ENCODE measurements at regions of chr16 and their contacts with region 1.

Region 1: DNA sequence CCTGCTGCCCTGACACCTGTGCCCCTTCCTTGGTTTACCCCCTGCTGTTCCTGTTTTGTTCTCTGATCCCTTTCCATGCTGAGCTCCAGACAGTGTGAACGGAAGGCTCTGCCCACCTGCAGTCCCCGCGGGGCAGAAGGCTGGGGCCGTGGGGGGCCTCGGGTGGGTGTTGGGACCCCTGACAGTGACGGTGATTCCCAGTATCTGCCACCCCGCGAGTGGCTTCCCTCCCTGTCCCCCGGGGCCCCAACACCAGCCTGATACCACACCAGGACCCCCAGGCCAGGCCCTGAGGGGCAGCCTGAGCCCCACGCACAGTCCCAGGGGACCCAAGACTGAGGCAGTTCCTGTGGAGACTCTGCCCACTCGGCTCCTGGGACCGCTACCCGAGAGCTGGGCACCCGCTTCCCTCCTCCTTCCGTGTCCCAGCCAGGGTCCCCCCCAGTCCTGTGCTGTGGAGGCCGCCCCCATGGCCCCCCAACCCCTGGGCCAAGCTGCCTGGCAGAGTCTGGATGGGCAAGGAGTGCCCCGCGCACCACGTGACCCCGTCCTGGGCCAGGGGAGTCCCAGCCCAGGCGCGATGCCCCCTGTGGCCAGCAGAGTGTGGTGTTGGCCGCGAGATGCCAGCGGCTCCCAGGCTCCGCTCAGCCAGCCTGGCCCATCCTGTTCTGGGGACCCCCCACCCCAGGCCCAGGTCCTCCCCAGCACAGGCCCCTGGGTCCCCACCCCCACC is 10.0 kb upstream of the C1QTNF8 start:
- DNase-seq: no peak
- ATAC-seq: no peak
- H3K4me3 ChIP-seq: no peak overlapping the region
- H3K27ac ChIP-seq: no peak overlapping the region
- H3K4me1 ChIP-seq: peaks cover 0 to 4% of the 10 kb centered on the region in 2 donors
- H3K27me3 ChIP-seq: peaks cover 28 to 52% (median 39%) of the 10 kb centered on the region in 3 donors
- CTCF ChIP-seq: peak; percentile 32 to 74 (median 70)
- POLR2A ChIP-seq: no peak

Region 2: GRCh38 chr16:1048442-1049112 is 57.5 kb before region 1 on chr16:
- in situ Hi-C with region 1: no loop called
- intact Hi-C with region 1: no loop called
- DNase-seq: no peak
- ATAC-seq: no peak
- H3K4me3 ChIP-seq: no peak overlapping the region
- H3K27ac ChIP-seq: no peak overlapping the region
- H3K4me1 ChIP-seq: peaks cover 0 to 4% of the 10 kb centered on the region in 2 donors
- H3K27me3 ChIP-seq: peaks cover 49 to 79% (median 66%) of the 10 kb centered on the region in 3 donors
- CTCF ChIP-seq: no peak
- POLR2A ChIP-seq: no peak

Region 3: GRCh38 chr16:1063728-1064127 is 42.3 kb before region 1 on chr16:
- in situ Hi-C with region 1: no loop called
- intact Hi-C with region 1: no loop called
- DNase-seq: no peak
- ATAC-seq: no peak
- H3K4me3 ChIP-seq: no peak overlapping the region
- H3K27ac ChIP-seq: no peak overlapping the region
- H3K4me1 ChIP-seq: no peaks in the 10 kb centered on the region
- H3K27me3 ChIP-seq: peaks cover 29 to 48% (median 32%) of the 10 kb centered on the region in 3 donors
- CTCF ChIP-seq: no peak
- POLR2A ChIP-seq: no peak

Region 4: DNA sequence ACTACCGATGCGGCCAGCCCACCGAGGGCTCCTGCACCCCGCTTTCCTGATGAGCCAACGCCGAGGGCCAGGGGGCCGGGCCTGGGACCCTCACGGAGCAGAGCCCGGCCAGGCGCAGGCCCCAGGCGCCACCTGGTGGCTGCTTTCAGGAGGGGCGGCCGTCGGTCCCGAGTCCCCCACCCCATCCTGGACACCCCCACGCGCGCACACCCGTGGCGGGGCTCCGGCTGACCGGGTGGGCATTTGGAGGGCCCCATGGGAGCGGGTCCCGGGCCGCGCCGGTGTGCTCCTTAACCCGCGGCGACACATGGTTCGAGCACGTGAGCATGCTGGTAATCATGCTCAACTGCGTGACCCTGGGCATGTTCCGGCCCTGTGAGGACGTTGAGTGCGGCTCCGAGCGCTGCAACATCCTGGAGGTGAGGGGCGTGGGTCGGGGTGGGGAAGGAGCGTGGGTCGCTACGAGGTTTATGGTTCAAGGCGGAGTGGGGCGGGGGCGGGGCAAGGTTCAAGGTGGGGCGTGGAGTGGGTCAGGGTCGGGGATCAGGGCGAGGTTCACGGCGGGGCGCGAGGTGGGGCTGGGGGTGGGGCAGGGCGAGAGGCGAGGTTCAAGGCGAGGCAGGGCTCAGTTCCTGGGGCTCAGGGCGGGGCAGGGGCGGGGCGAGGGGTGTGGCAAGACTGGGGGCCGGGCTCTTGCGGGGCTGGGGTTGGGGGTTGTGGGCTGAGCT is 88.8 kb after region 1 on chr16:
- in situ Hi-C with region 1: no loop called
- intact Hi-C with region 1: loop called (anchors 1 kb)
- DNase-seq: no peak
- ATAC-seq: no peak
- H3K4me3 ChIP-seq: no peak overlapping the region
- H3K27ac ChIP-seq: no peak overlapping the region
- H3K4me1 ChIP-seq: no peaks in the 10 kb centered on the region
- H3K27me3 ChIP-seq: peaks cover 3 to 18% (median 8%) of the 10 kb centered on the region in 3 donors
- CTCF ChIP-seq: peak; percentile 27 to 81 (median 68)
- POLR2A ChIP-seq: no peak

Measured in gastrocnemius medialis (tissue), 4 donors.